Posterior cingulate gyrus (tissue), 11 donors: ENCODE measurements at regions of chr10 and their contacts with region 1.

Region 1: GRCh38 chr10:5684318-5684970 is at the start of gene TASOR2:
- DNase-seq: peak; percentile 93 to 99 (median 97)

Region 2: GRCh38 chr10:5252177-5253015 is 432.0 kb before region 1 on chr10:
- intact Hi-C with region 1: no loop called
- DNase-seq: peak in 1 of 10 donors; percentile 36

Region 3: GRCh38 chr10:5548527-5549223 is 135.8 kb before region 1 on chr10:
- intact Hi-C with region 1: no loop called
- DNase-seq: peak in 3 of 10 donors; percentile 4 to 72 (median 59)

Region 4: DNA sequence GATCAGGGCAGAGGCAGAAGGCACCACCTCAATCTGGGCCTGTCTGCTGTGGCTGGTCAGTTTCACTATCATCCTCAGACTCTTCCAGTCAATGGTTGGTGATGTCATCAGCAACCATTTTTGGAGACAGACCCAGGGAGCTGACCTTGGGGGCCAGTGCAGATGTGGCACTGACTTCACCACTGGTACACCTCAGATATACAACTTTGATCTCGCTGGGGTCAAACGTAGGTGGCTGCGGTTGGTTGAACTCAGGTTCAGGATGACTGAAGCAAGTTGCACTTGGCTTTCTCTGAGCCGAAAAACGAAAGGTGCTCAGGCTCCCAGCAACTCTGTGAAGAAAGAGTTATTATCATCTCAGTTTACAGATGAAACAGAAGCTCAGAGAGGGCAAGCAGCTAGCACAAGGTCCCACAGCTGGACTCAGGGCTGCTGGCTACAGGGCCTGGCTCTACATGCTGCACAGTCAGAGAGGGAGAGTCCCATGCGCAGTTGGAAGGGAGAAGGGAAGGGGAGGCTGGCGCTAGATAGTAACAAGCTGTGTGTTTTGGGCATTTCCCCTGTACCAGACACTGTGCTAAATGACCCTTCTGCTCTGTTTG is 178.0 kb after region 1 on chr10:
- intact Hi-C with region 1: no loop called
- DNase-seq: peak in 2 of 10 donors; percentile 30 to 62

Region 5: DNA sequence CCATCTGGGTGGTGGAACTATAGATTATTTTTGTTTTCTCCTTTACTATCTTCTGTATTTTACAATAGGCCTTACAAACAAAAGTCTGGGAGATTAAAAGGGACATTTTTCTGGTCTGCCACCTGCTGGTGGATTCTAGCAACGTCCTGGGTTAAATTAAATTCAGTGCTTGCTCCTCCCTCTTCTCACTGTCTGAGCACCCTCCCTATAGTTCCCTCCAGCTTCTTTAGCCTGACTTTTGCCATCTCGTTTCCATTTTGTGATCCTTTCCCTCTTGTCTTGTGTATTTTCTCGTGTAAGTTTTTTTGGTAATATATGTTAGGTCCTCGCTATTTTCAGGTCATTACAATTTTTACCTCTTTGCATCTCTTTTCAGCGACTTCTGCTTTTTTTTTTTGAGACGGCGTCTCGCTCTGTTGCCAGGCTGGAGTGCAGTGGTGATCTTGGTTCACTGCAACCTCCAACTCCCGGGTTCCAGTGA is 189.1 kb after region 1 on chr10:
- intact Hi-C with region 1: loop called (anchors 5 kb)
- DNase-seq: peak in 7 of 10 donors; percentile 34 to 88 (median 73)

Region 6: DNA sequence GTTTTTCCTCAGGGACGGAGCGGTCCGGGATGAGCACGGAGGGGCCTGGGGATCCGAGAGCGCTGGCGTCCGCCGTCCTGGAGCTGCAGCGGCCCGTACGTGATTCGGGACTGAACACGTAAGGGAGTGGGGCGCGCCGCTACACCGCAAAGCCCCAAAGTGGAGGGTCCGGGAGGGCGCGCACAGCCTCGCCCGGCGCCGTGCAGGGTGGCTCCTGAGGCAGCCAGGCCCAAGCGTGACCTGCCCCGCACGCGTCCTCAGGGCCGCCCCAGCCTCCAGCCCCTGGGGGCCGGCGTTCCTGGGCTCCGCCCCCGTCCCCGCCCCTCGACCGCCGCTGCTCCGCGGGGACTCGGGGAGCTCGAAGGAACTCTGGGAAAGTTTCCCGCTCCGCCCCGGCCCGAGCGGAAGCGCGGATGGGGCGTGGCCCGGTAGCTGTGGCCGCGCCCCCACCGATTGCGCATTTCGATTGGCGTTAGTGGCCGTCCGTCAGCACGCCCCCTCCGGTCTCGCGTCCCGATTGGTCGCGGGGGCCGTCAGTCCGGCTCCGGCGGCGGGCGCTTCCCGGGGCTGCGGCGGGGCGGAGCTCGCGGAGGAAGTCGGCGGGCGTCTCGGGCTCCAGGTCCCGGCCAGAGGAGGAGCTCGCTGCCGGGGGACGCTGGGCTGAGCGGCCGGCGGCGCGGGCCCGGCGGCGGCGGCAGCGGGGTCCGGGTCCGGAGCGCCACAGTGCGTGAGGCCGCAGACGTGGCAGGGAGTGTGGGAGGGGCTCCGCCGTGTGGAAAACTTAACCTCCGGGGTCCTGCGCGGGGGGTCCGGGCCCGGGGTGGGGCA is 205.4 kb after region 1 on chr10 and contains the starts of genes ANKRD16 and FBH1:
- intact Hi-C with region 1: loop called (anchors 5 kb)
- DNase-seq: peak; percentile 96 to 100 (median 98)

Region 7: DNA sequence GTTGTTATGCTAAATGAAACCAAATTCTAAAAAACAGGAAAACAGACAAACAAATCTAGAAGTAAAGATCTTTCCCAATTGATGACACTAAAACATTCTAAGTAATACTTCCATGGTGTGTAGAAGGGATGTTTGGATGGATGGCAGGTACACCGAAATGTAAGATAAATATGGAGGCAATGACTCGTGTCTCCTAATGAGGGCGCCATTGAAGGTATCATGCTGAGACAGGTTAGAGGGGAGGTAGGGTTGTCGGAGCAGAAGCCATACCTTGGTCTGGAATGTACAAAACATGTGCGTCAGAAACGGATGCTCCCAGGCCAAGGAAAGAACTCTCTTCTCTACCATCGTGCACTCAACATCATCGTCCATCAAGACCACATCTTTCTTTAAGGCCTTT is 794.3 kb after region 1 on chr10:
- intact Hi-C with region 1: no loop called
- DNase-seq: no peak